ENCODE measurements at regions of chr3 and their contacts with region 1.

Region 1: DNA sequence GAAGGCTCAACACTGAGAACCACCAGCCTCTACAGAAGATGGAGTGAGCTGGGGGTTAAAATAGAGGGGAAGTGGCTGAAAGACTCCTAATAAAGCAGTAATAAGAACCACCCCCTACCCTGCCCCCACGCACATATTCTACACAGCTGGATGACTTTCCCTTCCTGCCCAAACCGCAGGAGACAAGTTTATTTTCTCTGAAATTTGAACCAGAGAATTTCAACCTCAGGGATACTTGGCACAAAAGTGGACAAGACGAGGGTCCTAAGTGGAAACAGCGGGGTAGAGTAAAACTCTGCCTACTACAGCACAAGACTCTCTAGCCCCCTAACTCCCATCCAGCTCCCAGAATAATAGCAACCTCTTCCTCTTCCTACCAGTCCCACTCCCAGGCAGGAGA is 28.4 kb downstream of the USF3 start:
- DNase-seq: no peak
- H3K4me3 ChIP-seq: no peak overlapping the region
- H3K27ac ChIP-seq: no peak overlapping the region
- H3K4me1 ChIP-seq: no peaks in the 10 kb centered on the region
- H3K27me3 ChIP-seq: no peaks in the 10 kb centered on the region
- CTCF ChIP-seq: no peak

Region 2: GRCh38 chr3:113405180-113405579 is 262.8 kb before region 1 on chr3:
- CTCF ChIA-PET with region 1: no interaction called
- POLR2A ChIA-PET with region 1: no interaction called
- intact Hi-C with region 1: no loop called
- DNase-seq: no peak
- H3K4me3 ChIP-seq: no peak overlapping the region
- H3K27ac ChIP-seq: no peak overlapping the region
- H3K4me1 ChIP-seq: no peaks in the 10 kb centered on the region
- H3K27me3 ChIP-seq: no peaks in the 10 kb centered on the region
- CTCF ChIP-seq: no peak

Region 3: GRCh38 chr3:113678773-113679172 is 10.8 kb after region 1 on chr3:
- CTCF ChIA-PET with region 1: interaction called, 8 read pairs
- POLR2A ChIA-PET with region 1: interaction called, 21 read pairs
- intact Hi-C with region 1: no loop called
- DNase-seq: no peak
- H3K4me3 ChIP-seq: no peak overlapping the region
- H3K27ac ChIP-seq: no peak overlapping the region
- H3K4me1 ChIP-seq: no peaks in the 10 kb centered on the region
- H3K27me3 ChIP-seq: no peaks in the 10 kb centered on the region
- CTCF ChIP-seq: no peak

Region 4: DNA sequence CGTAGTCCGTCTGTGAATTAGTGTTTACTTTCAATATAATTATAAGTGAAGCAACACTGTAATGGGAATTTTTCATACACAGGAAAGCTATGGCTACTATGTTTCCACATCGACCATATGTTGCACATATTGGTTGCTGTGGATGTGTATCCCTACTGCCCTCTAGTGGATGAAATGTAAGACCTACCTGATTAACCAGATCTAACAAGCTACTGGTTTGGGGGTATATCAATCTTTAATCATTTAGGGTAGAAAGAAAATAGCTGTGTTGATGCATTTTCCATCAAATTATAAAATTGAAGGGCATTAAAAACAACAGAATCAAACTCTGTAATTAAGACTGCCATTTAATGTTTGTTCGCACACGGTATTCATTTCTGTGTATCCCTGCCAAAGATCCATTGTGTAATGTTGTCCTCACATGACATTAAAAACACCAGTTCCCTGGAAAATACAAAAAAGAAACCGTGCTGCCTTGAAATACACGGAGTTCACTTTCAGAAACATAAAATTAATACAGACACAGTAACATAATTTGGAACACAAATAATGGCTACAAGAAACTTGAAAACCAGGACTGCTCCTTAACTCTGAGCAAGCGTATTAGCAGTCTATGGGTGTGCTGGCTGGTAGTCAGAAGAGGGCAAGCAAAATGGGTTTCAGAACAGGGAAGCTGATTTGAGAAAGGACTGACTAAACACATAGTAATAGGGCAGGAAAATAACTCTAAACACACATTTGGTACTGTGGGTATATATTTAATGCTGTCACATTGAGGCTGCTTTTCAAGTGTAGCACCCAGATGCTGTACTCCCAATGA is 750.9 kb after region 1 on chr3:
- CTCF ChIA-PET with region 1: no interaction called
- POLR2A ChIA-PET with region 1: no interaction called
- intact Hi-C with region 1: no loop called
- DNase-seq: peak in 1 of 2 experiments; percentile 55
- H3K4me3 ChIP-seq: no peak overlapping the region
- H3K27ac ChIP-seq: no peak overlapping the region
- H3K4me1 ChIP-seq: no peaks in the 10 kb centered on the region
- H3K27me3 ChIP-seq: no peaks in the 10 kb centered on the region
- CTCF ChIP-seq: peak; percentile 85